Cardiac septum (tissue), 1 donor: ENCODE measurements at regions of chr18 and their contacts with region 1.

Region 1: DNA sequence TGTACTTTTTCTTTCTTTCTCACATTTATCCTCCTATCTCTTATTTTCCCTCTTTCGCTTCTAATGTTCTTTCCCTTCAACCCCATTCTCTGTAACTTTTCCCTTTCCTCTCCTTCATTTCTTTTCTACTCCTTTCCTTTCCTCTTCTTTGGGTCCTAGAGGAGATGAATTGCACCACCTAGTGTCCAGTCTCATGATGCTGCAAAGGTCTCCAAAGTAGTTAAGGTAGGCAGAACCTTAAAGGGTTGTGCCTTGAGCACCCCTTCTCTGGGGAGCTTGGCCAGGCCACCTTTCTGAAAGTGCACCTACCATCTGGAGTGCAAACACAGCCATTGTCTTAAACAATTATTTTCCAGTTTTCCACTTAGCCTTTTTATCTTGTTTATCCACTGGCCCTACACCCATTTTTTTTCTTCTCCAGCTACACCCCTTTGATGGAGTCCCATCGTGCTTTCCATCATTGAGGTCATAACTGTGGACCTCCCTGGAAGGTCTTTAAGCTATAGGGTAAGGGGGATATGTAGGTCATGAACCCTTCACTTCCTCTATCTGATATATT is 156.0 kb downstream of the ESCO1 start:
- DNase-seq: no peak

Region 2: DNA sequence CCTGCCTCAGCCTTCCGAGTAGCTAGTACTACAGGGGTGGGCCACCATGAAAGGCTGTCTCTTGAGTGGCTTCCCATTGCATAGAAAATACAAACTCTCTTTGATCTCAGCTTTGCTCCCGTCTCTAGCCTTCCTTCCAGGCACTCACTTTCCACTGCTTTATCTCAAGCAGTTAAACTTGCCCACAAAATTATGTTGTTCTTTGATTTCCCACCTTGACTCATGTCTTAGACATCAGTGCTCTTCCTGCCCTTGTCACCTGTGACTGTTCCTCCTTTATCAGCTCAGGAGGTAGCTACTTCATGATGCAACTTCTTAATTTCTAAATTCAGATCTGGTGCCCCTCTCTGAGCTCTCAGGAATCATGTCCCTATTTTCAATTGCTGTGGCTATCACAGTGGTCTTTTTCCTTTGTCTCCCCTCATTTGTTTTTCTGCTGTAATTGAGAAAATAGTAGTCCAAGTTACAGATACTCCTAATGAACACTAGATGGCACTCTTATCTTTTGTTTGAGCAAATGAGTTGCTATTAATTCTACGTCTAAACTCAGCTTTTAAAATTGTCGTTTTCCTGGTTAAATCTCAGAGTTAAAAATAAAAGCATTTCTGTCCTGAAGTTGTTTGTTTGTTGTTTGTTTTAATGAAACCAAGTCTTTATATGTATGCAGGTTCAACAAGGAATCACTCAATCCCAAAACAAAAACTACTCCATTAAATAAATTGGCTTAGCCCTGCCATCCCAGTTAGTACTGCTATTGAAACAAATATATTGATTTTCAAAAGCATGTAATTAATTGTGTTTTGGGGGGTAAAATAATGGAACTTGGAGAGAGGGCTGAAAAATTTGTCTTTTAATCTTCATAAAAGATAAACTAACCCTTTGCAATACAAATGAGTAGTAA is 249.4 kb before region 1 on chr18:
- intact Hi-C with region 1: loop called (anchors 1 kb)
- DNase-seq: no peak

Region 3: DNA sequence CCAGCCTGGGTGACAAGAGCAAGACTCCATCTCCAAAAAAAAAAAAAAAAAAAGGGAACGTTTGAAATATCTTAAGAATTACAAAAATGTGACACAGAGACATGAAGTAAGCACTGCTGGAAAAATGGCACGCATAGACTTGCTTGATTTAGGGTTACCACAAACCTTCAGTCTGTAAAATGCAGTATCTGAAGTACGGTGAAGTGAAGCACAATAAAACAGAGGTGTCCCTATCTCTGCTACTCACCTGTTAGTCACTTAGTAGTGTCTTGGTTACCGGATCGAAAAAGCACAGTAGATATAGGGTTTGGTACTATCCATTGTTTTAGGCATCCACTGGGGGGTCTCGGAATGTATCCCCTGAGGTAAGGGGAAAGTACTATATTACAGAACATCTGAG is 214.1 kb before region 1 on chr18:
- intact Hi-C with region 1: loop called (anchors 10 kb)
- DNase-seq: no peak

Region 4: DNA sequence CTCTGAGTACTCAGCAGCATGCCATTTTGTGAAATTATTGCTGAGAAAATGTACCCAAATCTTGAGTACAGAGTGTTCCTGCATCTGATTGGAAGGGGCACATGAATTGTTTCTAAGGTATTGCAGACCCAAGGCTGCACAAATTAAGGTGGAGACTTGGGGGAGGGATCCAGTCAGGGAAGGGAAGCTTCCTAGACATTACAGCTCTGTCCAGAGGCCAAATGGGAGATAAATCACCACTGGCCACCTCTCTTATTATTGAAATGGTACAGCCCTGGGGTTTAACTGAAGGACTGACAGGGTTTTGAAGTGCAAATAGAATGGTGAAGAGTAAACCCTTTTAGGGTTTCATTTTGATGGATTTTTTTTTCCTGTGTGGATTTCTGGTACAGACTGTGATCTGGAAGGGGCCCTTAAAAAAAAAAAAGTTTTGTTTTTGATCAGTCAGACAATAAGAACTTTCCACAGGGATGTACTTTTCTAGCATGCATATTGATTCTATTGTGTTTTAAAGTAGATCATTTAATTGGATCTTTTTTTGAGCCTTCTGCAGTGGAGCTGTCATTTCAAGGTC is 83.2 kb before region 1 on chr18:
- intact Hi-C with region 1: loop called (anchors 10 kb)
- DNase-seq: no peak

Region 5: GRCh38 chr18:21509062-21509461 is 64.5 kb after region 1 on chr18:
- intact Hi-C with region 1: loop called (anchors 10 kb)
- DNase-seq: no peak